ENCODE measurements at regions of chr17 and their contacts with region 1.

Region 1: DNA sequence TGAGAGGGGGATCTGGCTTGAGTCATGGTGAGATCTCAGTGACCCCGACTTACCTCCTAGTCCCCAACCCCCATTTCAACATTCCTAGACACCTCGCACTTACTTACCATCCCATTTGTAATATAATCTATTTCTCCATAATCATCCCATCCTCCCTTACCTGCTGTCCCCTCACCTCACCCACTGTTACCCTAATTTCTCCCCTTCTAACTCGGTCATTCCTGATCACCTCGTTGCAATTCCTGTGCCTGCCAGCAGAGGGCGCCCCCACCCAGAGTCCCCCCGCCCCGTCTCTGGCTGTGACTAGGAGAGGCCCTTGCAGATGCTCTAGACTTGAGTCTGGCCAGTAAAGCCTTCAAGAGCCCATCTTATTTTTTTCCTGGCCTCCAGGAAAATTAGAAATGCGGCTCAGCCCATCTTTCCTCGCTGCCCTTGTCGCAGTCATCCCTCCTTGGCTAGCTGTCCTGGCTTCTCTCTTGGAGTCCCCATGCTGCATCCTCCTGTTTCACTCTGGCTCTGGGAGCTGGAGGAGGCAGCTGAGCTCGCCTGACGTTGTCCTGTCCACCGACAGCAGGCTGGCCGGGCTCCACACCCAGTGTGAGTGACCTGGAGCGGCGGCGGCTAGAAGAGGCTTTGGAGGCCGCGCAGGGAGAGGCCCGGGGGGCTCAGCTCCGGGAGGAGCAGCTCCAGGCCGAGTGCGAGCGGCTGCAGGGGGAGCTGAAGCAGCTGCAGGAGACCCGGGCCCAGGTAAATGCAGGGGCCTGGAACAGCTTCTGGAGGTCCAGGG is 5.0 kb downstream of the TBKBP1 start:
- DNase-seq: peak; percentile 69
- ATAC-seq: peak; percentile 36
- H3K4me3 Mint-ChIP-seq: no peak overlapping the region
- H3K27ac Mint-ChIP-seq: peak overlapping the region; percentile 56
- H3K4me1 Mint-ChIP-seq: peaks cover 49% of the 10 kb centered on the region
- H3K27me3 Mint-ChIP-seq: no peaks in the 10 kb centered on the region
- CTCF ChIP-seq: no peak

Region 2: DNA sequence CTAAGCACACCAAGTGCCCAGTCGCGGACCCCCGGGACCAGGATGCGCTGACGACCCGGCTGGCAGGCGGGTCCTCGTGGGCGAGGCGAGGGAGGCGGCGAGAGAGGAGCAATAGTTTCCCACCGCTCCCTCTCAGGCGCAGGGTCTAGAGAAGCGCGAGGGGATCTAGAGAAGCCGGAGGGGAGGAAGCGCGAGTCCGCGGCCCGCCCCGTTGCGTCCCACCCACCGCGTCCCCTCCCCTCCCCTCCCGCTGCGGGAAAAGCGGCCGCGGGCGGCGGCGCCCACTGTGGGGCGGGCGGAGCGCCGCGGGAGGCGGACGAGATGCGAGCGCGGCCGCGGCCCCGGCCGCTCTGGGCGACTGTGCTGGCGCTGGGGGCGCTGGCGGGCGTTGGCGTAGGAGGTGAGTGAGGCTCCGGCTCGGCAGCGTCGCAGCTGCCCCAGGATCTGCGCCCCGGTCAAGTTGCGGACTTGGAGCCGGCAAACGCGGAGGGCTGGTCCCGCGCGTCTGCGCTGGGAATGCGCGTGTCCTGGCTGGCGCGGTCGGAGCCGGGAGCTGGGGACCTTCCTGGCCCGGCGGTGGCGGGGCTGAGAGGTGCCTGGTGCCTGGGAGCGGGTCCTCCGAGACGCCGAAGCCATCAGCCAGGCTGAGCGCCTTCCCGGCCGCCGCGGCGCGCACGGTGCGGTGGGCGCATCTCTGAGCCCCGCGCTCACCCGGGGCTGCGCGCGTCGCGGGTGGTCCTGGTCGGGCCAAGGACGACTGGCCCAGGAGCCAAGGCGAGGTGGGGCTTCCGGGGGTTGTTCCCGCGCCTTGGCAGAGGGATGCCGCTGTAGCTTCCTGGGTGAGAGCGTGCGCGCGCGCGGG is 445.2 kb before region 1 on chr17 and contains the start of gene ITGB3:
- CTCF ChIA-PET with region 1: no interaction called
- POLR2A ChIA-PET with region 1: no interaction called
- intact Hi-C with region 1: no loop called
- DNase-seq: peak; percentile 78
- ATAC-seq: peak; percentile 97
- H3K4me3 Mint-ChIP-seq: peak within 1 kb of the TSS; percentile 91
- H3K27ac Mint-ChIP-seq: peak within 1 kb of the TSS; percentile 74
- H3K4me1 Mint-ChIP-seq: peaks cover 17% of the 10 kb centered on the region
- H3K27me3 Mint-ChIP-seq: no peaks in the 10 kb centered on the region
- CTCF ChIP-seq: no peak
- total RNA-seq, gene ITGB3: 4.1 and 4.7 TPM in 2 replicates

Region 3: DNA sequence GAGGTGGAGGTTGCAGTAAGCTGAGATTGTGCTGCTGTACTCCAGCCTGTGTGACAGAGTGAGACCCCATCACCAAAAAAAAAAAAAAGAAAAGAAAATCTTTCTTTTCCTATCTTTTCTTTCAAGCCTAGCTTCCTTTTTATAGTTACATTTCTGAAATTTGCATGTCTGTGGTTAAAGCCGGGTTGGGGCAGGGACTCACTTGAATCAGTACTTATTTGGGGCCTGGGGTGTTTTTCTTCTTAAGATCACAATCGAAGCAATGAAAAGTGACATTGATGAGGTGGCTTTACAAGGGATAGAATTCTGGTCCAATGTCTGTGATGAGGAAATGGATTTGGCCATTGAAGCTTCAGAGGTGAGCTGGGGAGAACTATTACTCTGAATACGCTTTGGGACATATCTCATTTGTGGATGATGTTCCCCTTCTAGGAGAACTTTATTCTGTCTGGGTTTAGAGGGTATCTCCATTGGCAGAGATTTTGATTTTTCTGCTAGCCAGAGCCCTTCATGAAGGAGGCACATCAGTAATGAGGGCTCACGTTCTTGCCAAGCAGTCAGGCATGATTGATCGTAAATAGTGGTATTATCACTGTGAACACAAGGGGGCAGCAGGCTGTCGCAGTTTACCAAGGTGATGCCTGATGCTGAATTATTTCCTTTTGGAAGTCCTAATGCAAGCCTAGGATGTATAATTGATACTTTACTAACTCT is 34.9 kb before region 1 on chr17:
- CTCF ChIA-PET with region 1: interaction called, 19 read pairs
- POLR2A ChIA-PET with region 1: interaction called, 5 read pairs
- intact Hi-C with region 1: loop called (anchors 1 kb)
- DNase-seq: no peak
- ATAC-seq: peak; percentile 74
- H3K4me3 Mint-ChIP-seq: peak overlapping the region; percentile 73
- H3K27ac Mint-ChIP-seq: peak overlapping the region; percentile 90
- H3K4me1 Mint-ChIP-seq: peaks cover 36% of the 10 kb centered on the region
- H3K27me3 Mint-ChIP-seq: no peaks in the 10 kb centered on the region
- CTCF ChIP-seq: peak; percentile 70

Region 4: GRCh38 chr17:47726796-47727725 is 28.1 kb after region 1 on chr17:
- CTCF ChIA-PET with region 1: interaction called, 14 read pairs
- POLR2A ChIA-PET with region 1: interaction called, 16 read pairs
- intact Hi-C with region 1: no loop called
- DNase-seq: no peak
- ATAC-seq: no peak
- H3K4me3 Mint-ChIP-seq: no peak overlapping the region
- H3K27ac Mint-ChIP-seq: no peak overlapping the region
- H3K4me1 Mint-ChIP-seq: peaks cover 8% of the 10 kb centered on the region
- H3K27me3 Mint-ChIP-seq: peaks cover 9% of the 10 kb centered on the region
- CTCF ChIP-seq: no peak

Region 5: DNA sequence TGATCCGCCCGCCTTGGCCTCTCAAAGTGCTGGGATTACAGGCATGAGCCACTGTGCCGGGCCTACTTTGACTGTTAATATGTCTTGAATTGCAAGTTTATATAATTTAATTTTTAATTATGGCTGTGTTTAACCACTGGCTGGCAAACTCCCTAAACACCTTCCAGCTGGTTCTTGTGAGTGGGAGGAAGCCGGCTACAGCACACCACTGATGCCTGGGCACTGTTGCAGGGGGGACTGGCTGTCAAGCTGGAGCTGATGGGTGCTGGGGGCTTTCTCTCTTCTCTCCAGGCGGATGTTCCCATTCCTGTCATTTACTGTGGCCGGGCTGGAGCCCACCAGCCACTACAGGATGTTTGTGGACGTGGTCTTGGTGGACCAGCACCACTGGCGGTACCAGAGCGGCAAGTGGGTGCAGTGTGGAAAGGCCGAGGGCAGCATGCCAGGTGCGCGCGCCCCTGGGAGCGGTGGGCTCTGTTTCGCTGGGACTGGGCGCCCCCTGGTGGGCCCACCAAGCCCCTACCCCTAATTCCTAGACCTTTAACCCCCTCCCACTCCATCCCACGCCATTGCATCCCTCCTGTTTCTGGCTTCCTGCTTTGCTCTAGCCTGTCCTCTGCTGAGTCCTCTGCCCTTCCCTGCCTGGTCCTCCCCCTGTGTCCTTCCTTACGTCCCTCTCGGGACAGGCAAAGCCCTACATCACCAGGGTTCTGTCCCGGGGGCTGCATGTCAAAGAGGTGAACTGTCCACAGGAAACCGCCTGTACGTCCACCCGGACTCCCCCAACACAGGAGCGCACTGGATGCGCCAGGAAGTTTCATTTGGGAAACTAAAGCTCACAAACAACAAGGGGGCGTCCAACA is 43.6 kb after region 1 on chr17:
- CTCF ChIA-PET with region 1: interaction called, 64 read pairs
- POLR2A ChIA-PET with region 1: no interaction called
- intact Hi-C with region 1: loop called (anchors 1 kb)
- DNase-seq: peak; percentile 53
- ATAC-seq: peak; percentile 90
- H3K4me3 Mint-ChIP-seq: no peak overlapping the region
- H3K27ac Mint-ChIP-seq: no peak overlapping the region
- H3K4me1 Mint-ChIP-seq: peaks cover 25% of the 10 kb centered on the region
- H3K27me3 Mint-ChIP-seq: no peaks in the 10 kb centered on the region
- CTCF ChIP-seq: no peak

Region 6: GRCh38 chr17:47789611-47790561 is 90.9 kb after region 1 on chr17:
- CTCF ChIA-PET with region 1: interaction called, 5 read pairs
- POLR2A ChIA-PET with region 1: no interaction called
- intact Hi-C with region 1: loop called (anchors 2 kb)
- DNase-seq: peak; percentile 48
- ATAC-seq: peak; percentile 80
- H3K4me3 Mint-ChIP-seq: peak overlapping the region; percentile 74
- H3K27ac Mint-ChIP-seq: no peak overlapping the region
- H3K4me1 Mint-ChIP-seq: peaks cover 9% of the 10 kb centered on the region
- H3K27me3 Mint-ChIP-seq: peaks cover 54% of the 10 kb centered on the region
- CTCF ChIP-seq: no peak

Measured in activated B cell treated with CpG ODN at 0.5 μM for 24 hours (primary cell).